ENCODE measurements at regions of chr9 and their contacts with region 1.

Region 1: GRCh38 chr9:126471084-126471624 is 142.6 kb upstream of the LMX1B start:
- DNase-seq: peak; percentile 84
- ATAC-seq: peak; percentile 83
- H3K4me3 ChIP-seq: peak overlapping the region in 4 of 5 experiments; percentile 11 to 60 (median 30)
- H3K4me3 Mint-ChIP-seq: peak overlapping the region; percentile 76
- H3K27ac ChIP-seq: peak overlapping the region; percentile 62 to 83
- H3K27ac Mint-ChIP-seq: peak overlapping the region; percentile 90
- H3K4me1 ChIP-seq: peaks cover 46 to 49% of the 10 kb centered on the region in 2 donors
- H3K4me1 Mint-ChIP-seq: peaks cover 56% of the 10 kb centered on the region
- H3K27me3 ChIP-seq: no peaks in the 10 kb centered on the region
- H3K27me3 Mint-ChIP-seq: no peaks in the 10 kb centered on the region
- CTCF ChIP-seq: no peak

Region 2: DNA sequence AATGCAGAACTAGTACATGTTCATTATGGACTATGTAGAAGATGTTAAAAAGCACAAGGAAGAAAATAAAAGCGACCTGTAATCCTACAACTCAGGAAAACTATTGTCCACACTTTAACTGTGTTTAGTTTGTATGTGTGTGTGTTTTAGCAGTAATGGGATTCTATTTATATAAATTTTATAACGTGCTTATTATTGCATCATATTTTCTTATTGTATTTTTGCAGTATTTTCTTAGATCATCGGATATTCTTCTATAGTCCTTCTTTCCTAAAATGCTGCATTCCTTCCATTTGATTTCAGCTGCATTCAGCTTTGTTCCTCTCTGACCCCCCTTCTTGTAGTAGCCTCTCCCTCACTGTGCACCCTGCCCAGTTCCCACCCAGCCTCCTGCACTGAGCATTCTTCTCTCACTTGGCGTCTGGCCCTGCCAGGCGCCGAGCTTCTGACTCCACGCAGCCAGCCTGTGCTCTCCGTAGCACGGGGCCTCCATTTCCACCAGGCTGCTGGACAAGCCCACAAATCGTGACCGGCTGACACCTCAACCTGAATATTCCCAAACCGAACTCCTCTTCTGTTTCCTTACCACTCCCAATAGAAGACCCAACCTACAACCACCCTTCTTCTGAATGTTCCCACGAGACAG is 104.7 kb before region 1 on chr9:
- CTCF ChIA-PET with region 1: no interaction called
- POLR2A ChIA-PET with region 1: no interaction called
- intact Hi-C with region 1: no loop called
- DNase-seq: no peak
- ATAC-seq: no peak
- H3K4me3 ChIP-seq: no peak overlapping the region
- H3K4me3 Mint-ChIP-seq: no peak overlapping the region
- H3K27ac ChIP-seq: no peak overlapping the region
- H3K27ac Mint-ChIP-seq: no peak overlapping the region
- H3K4me1 ChIP-seq: no peaks in the 10 kb centered on the region
- H3K4me1 Mint-ChIP-seq: no peaks in the 10 kb centered on the region
- H3K27me3 ChIP-seq: no peaks in the 10 kb centered on the region
- H3K27me3 Mint-ChIP-seq: no peaks in the 10 kb centered on the region
- CTCF ChIP-seq: no peak

Region 3: GRCh38 chr9:126411225-126411947 is 59.8 kb before region 1 on chr9:
- CTCF ChIA-PET with region 1: interaction called, 3 read pairs
- POLR2A ChIA-PET with region 1: no interaction called
- intact Hi-C with region 1: loop called (anchors 1 kb)
- DNase-seq: peak; percentile 71
- ATAC-seq: peak; percentile 91
- H3K4me3 ChIP-seq: peak overlapping the region; percentile 11 to 45 (median 35)
- H3K4me3 Mint-ChIP-seq: peak overlapping the region; percentile 89
- H3K27ac ChIP-seq: peak overlapping the region; percentile 58 to 67
- H3K27ac Mint-ChIP-seq: peak overlapping the region; percentile 80
- H3K4me1 ChIP-seq: peaks cover 30 to 34% of the 10 kb centered on the region in 2 donors
- H3K4me1 Mint-ChIP-seq: peaks cover 38% of the 10 kb centered on the region
- H3K27me3 ChIP-seq: no peaks in the 10 kb centered on the region
- H3K27me3 Mint-ChIP-seq: no peaks in the 10 kb centered on the region
- CTCF ChIP-seq: no peak

Region 4: DNA sequence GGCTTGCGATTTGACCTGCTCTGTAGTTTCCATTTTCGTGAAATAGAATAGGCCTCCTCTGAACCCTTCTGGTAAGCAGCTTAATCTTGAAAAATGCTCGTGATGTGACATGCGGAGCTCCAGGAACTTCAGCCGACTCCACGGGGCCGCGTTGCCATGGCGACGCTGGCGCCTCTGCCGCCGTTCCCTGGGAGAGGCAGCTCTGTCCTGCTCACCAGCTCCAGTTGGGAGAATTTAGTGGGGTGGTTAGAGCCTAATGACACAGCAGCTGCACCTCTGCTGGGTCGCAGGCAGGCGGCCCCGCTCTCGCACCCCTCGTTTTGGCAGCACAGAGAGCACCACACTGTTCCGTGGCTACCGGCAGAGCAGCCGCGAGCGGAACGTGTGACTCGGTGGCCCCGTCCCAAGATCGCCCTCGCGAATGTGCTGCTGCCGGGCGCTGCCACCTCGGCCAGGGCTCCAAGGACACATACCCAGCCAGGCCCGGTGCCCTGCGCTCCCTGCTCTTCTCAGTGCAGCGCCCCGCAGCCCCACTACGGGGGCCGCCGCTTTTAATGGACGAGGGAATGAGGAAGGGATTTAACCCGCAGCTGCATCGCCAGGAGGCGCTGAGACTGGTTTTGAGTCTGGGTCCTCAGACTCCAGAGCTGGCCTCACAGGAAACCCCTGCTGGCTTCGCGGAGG is 11.3 kb after region 1 on chr9:
- CTCF ChIA-PET with region 1: interaction called, 12 read pairs
- POLR2A ChIA-PET with region 1: interaction called, 4 read pairs
- intact Hi-C with region 1: no loop called
- DNase-seq: no peak
- ATAC-seq: peak; percentile 17
- H3K4me3 ChIP-seq: no peak overlapping the region
- H3K4me3 Mint-ChIP-seq: peak overlapping the region; percentile 23
- H3K27ac ChIP-seq: no peak overlapping the region
- H3K27ac Mint-ChIP-seq: no peak overlapping the region
- H3K4me1 ChIP-seq: peaks cover 7 to 19% of the 10 kb centered on the region in 2 donors
- H3K4me1 Mint-ChIP-seq: peaks cover 16% of the 10 kb centered on the region
- H3K27me3 ChIP-seq: no peaks in the 10 kb centered on the region
- H3K27me3 Mint-ChIP-seq: peaks cover 7% of the 10 kb centered on the region
- CTCF ChIP-seq: no peak

Region 5: DNA sequence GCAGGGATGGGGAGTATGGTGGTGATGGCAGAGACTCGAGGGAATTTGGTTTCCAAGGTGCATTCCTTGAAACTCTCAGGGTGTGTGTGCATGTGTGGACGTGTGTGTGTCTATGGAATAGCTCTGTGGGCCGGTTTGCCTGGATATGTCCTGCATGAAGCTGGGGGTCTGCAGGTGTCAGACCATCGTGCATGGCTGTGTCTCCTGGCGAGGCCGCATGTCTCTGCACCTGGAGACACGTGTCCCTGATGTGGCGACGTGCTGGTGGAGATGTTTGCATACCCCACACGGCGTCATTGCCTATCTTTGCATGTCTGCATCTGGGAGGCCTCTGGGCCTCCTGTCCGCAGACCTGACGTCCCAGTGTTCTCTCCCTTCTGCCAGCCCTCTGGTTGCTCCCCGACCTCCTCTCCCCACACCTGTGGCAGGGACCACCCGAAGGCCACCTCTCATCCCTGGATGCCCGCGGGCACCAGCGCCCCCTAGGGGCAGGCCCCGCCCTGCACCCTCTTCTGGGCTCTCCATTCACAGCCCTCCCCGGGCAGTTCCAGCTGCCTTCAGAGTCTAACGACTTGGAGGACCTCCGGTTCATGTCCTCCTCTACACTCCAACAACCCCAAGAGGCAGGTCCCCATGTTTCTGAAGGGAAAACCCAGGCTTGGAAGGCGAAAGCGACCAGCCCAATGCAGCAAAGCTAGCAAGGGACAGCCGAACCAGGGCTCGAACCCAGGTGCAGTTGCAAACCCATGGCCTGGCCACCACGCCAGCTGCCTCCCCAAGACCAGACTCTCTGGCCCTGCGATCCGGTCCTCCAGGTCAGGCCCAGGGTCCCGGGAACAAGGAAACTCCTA is 231.2 kb after region 1 on chr9:
- CTCF ChIA-PET with region 1: no interaction called
- POLR2A ChIA-PET with region 1: no interaction called
- intact Hi-C with region 1: no loop called
- DNase-seq: peak; percentile 45
- ATAC-seq: no peak
- H3K4me3 ChIP-seq: no peak overlapping the region
- H3K4me3 Mint-ChIP-seq: no peak overlapping the region
- H3K27ac ChIP-seq: no peak overlapping the region
- H3K27ac Mint-ChIP-seq: no peak overlapping the region
- H3K4me1 ChIP-seq: peaks cover 13 to 16% of the 10 kb centered on the region in 2 donors
- H3K4me1 Mint-ChIP-seq: peaks cover 15% of the 10 kb centered on the region
- H3K27me3 ChIP-seq: peaks cover 0 to 32% (median 19%) of the 10 kb centered on the region in 4 experiments
- H3K27me3 Mint-ChIP-seq: peaks cover 37% of the 10 kb centered on the region
- CTCF ChIP-seq: peak; percentile 77